ENCODE measurements at regions of chr1 and their contacts with region 1.

Region 1: DNA sequence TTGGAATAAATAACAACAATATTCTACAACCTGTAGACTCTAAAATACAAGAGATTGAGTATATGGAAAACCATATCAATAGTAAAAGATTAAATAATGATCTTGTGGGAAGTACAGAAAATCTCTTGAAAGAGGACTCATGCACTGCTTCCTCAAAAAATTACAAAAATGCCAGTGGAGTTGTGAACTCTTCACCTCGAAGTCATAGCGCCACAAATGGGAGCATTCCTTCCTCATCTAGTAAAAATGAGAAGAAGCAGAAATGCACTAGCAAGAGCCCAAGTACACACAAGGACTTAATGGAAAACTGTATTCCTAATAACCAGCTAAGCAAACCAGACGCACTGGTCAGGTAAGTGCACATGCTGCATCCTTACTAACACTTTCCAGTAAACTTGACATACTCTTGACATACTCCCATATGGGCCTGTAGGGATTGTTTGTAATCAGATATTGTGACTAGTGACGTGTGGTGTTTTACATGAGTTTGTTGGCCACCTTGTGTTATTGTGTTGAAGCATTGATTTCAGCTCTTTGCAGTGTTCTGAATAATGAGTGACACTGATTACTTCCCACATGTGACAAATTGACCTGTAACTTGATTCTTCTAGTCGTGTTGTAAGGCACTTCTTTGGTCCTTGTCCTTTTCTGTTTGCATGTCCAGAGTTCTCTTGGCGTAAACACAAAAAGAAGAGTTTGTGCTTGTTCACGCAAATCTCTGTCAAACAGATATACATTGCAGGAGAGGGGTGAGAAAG is 28.0 kb downstream of the MACO1 start:
- DNase-seq: no peak
- ATAC-seq: no peak
- H3K4me3 Mint-ChIP-seq: no peak overlapping the region
- H3K27ac Mint-ChIP-seq: no peak overlapping the region
- H3K4me1 Mint-ChIP-seq: peaks cover 2% of the 10 kb centered on the region
- H3K27me3 Mint-ChIP-seq: no peaks in the 10 kb centered on the region

Region 2: DNA sequence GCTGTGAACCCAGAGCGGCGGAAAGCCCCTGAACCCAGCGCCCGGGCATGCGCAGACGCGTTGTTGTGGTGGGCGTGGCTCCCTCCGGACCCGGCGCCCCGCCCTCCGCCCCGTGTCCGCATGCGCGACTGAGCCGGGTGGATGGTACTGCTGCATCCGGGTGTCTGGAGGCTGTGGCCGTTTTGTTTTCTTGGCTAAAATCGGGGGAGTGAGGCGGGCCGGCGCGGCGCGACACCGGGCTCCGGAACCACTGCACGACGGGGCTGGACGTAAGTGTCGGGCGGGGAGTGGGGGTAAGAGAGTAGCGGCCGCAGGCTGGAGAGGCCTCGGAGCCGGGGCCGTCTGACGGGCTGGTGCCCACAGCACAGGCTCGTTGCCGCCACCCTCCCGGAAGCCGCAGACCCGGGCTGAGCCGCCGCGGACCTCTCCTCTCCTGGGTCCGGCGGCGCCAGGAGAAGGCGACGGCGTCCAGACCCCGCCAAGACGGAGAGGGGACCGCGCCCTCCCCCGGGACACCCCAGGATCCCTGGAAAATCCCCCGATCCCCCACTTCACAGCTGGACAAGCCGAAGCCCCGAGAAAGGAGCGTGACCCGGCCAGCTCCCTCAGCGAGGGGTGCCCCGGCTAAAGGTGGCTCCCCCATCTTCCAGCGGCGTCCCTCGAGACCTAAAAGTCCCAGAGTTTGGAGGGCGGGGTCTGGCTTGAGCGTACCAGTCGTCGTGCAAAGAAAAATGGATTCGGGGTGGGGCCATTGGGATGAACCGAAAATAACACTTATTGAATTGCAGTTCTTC is 120.3 kb before region 1 on chr1 and contains the start of gene TMEM50A:
- CTCF ChIA-PET with region 1: no interaction called
- POLR2A ChIA-PET with region 1: no interaction called
- intact Hi-C with region 1: no loop called
- DNase-seq: peak; percentile 93
- ATAC-seq: peak; percentile 76
- H3K4me3 Mint-ChIP-seq: peak within 1 kb of the TSS; percentile 94
- H3K27ac Mint-ChIP-seq: peak within 1 kb of the TSS; percentile 93
- H3K4me1 Mint-ChIP-seq: peaks cover 31% of the 10 kb centered on the region
- H3K27me3 Mint-ChIP-seq: no peaks in the 10 kb centered on the region
- total RNA-seq, gene TMEM50A: 98.0 to 120 TPM

Region 3: DNA sequence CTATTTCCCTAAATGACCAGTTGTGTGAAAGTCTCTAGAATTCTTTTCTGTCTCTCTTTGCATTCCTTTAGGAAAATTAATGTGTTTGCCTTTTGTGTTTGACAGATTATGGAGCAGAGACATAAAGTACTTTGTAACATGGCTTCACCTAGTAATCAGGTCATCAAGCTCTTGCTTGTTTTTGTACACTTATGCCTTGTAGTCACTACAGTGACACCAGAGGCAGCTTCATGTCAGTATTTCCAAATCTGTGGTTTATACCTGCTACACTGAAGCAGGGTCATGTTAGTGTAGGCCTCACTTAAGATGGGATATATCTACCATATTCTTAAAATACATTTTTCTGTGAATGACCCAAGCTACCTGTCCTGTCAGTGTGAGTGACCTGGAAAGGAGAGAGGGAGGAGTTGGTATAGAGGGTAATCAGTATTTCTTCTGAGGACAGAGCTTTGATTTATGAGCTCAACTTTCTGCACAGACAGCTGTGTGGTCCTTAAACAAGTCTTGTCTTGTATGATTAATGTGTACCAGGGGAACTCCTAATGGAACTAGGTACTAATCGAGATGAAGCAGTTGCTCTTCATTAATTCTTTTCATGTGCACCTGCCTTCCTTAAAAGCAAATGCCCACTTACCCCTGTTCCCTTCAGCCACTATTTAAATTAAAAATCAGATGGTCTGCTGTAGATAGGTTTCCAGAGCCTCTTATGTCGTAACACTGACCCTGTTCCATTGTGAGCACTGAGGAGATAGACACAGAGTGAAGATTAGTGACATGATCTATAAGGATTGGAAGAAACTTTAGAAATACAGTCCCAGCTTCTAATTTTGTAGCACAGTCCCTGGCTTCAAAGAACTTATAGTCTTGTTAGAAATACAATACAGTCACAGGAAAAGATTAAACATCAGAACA is 17.7 kb after region 1 on chr1:
- CTCF ChIA-PET with region 1: interaction called, 3 read pairs
- POLR2A ChIA-PET with region 1: no interaction called
- intact Hi-C with region 1: loop called in 1 of 2 experiments (anchors 2 kb)
- DNase-seq: no peak
- ATAC-seq: peak; percentile 39
- H3K4me3 Mint-ChIP-seq: no peak overlapping the region
- H3K27ac Mint-ChIP-seq: peak overlapping the region; percentile 28
- H3K4me1 Mint-ChIP-seq: peaks cover 57% of the 10 kb centered on the region
- H3K27me3 Mint-ChIP-seq: no peaks in the 10 kb centered on the region

Measured in activated CD4-positive, alpha-beta T cell treated with anti-CD3 and anti-CD28 coated beads for 36 hours (primary cell).